ENCODE measurements at regions of chr15 and their contacts with region 1.

Region 1: GRCh38 chr15:28885630-28886430 is at the start of gene APBA2:
- DNase-seq: peak; percentile 37 to 75 (median 58)
- ATAC-seq: peak; percentile 50 to 64
- H3K4me3 Mint-ChIP-seq: peak within 1 kb of the TSS; percentile 88 to 96 (median 93)
- H3K27ac Mint-ChIP-seq: peak within 1 kb of the TSS; percentile 96 to 100 (median 99)
- H3K4me1 Mint-ChIP-seq: peaks cover 38 to 52% (median 48%) of the 10 kb centered on the region in 4 donors
- H3K27me3 Mint-ChIP-seq: no peaks in the 10 kb centered on the region
- polyA plus RNA-seq, gene APBA2: 75.5 to 164 (median 95.1) TPM

Region 2: GRCh38 chr15:28861031-28861534 is 24.7 kb before region 1 on chr15:
- POLR2A ChIA-PET with region 1: no interaction called
- DNase-seq: no peak
- ATAC-seq: no peak
- H3K4me3 Mint-ChIP-seq: no peak overlapping the region
- H3K27ac Mint-ChIP-seq: peak overlapping the region in 1 of 10 donors; percentile 31
- H3K4me1 Mint-ChIP-seq: peaks cover 0 to 3% (median 0%) of the 10 kb centered on the region in 4 donors
- H3K27me3 Mint-ChIP-seq: no peaks in the 10 kb centered on the region

Region 3: DNA sequence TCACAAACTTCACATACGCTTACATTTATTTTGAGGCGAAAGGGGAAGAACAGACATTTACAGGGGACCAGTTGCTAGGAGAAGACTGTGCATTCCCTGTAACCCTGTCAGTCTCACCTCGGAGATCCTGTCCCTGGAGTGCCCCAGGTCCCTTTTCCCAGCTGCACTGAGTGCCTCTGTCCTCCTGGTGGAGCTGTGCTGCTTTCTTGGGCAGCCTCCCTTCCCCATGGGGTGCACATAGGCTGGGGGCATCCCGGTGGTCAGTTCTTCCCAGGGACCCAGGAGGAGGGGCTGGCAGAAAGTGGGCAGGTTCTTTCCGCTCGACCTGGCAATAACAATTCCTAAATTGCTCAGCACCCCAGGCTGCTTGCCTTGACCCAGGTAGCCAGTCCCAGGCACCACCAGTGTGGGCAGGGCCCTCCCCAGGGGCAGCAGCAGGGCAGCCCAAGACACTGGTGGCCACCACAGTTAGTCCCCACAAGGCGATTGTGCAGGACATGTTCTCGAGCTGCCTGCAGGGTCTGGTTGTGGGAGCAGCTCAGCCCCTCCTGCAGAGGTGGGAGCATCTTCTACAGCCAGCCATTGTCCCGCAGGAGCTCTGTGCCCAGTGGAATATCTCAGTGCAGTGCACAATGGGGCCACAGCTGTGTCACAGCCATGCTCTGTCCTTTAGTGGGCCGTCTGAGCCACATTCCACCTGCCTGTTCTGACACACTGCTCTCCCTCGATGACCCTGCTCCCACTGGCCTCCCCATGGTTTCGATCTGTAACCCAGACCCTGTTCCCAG is 36.3 kb after region 1 on chr15:
- POLR2A ChIA-PET with region 1: interaction called, 62 read pairs
- DNase-seq: peak in 1 of 10 donors; percentile 49
- ATAC-seq: no peak
- H3K4me3 Mint-ChIP-seq: peak overlapping the region in 9 of 10 donors; percentile 30 to 90 (median 77)
- H3K27ac Mint-ChIP-seq: peak overlapping the region in 9 of 10 donors; percentile 78 to 93 (median 91)
- H3K4me1 Mint-ChIP-seq: peaks cover 49 to 89% (median 84%) of the 10 kb centered on the region in 4 donors
- H3K27me3 Mint-ChIP-seq: no peaks in the 10 kb centered on the region

Region 4: DNA sequence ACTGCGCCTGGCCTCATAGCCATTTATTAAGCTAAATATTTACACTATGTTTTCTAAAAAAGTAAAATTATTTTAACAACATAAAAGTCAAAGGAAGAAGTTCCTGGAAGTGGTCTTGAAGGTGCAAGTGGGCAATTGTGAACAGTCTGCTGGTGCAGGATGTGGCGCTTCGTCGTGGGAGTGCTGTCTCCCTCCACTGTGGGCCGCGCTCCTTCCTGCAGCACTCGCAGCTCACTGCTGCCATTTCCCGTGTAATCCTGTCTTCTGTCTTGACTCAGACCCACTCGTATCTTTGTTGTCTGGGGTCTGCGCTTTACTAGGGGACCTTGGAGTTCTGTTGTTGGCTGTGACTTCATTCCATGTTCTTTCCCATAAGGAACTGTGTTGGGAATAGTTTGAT is 56.2 kb after region 1 on chr15:
- POLR2A ChIA-PET with region 1: interaction called, 24 read pairs
- DNase-seq: peak; percentile 28 to 75 (median 57)
- ATAC-seq: peak; percentile 77 to 82
- H3K4me3 Mint-ChIP-seq: peak overlapping the region; percentile 55 to 88 (median 73)
- H3K27ac Mint-ChIP-seq: peak overlapping the region; percentile 87 to 97 (median 96)
- H3K4me1 Mint-ChIP-seq: peaks cover 42 to 99% (median 96%) of the 10 kb centered on the region in 4 donors
- H3K27me3 Mint-ChIP-seq: no peaks in the 10 kb centered on the region